Naive thymus-derived CD4-positive, alpha-beta T cell (primary cell): ENCODE measurements at regions of chr19 and their contacts with region 1.

Region 1: GRCh38 chr19:43438291-43439096 is 23.8 kb downstream of the TEX101 start:
- DNase-seq: peak in 2 of 9 donors; percentile 19 to 21
- ATAC-seq: peak; percentile 4
- H3K4me3 ChIP-seq: peak overlapping the region; percentile 33
- H3K4me3 Mint-ChIP-seq: peak overlapping the region; percentile 49 to 77 (median 64)
- H3K27ac ChIP-seq: peak overlapping the region; percentile 72
- H3K27ac Mint-ChIP-seq: peak overlapping the region; percentile 81 to 99 (median 93)
- H3K4me1 ChIP-seq: peaks cover 23 to 30% of the 10 kb centered on the region in 2 donors
- H3K4me1 Mint-ChIP-seq: peaks cover 29 to 75% (median 62%) of the 10 kb centered on the region in 7 donors
- H3K27me3 ChIP-seq: no peaks in the 10 kb centered on the region
- H3K27me3 Mint-ChIP-seq: peaks cover 0 to 2% (median 0%) of the 10 kb centered on the region in 5 donors

Region 2: DNA sequence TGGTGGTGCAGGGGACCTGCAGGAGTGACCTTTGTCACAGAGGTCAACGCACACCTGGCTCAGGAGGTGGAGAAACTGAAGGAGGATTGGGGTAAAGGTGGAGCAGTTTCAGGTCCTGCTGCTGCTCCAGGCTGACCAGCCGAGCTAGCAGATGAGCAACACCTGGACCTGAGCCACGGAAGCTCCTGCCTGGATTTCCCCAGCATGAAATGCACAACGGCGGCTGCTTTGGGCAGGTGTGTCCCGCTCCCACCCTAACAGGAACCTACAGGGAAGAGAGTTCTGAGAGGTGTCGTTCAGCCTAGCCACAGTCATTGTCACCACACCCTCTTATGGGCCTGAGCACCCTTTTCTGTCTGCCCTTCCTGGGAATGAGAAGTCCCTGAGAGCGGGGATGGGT is 100.8 kb before region 1 on chr19:
- CTCF ChIA-PET with region 1: no interaction called
- POLR2A ChIA-PET with region 1: no interaction called
- intact Hi-C with region 1: no loop called
- DNase-seq: no peak
- ATAC-seq: no peak
- H3K4me3 ChIP-seq: no peak overlapping the region
- H3K4me3 Mint-ChIP-seq: no peak overlapping the region
- H3K27ac ChIP-seq: no peak overlapping the region
- H3K27ac Mint-ChIP-seq: no peak overlapping the region
- H3K4me1 ChIP-seq: no peaks in the 10 kb centered on the region
- H3K4me1 Mint-ChIP-seq: peaks cover 0 to 6% (median 0%) of the 10 kb centered on the region in 7 donors
- H3K27me3 ChIP-seq: no peaks in the 10 kb centered on the region
- H3K27me3 Mint-ChIP-seq: peaks cover 0 to 32% (median 24%) of the 10 kb centered on the region in 5 donors

Region 3: DNA sequence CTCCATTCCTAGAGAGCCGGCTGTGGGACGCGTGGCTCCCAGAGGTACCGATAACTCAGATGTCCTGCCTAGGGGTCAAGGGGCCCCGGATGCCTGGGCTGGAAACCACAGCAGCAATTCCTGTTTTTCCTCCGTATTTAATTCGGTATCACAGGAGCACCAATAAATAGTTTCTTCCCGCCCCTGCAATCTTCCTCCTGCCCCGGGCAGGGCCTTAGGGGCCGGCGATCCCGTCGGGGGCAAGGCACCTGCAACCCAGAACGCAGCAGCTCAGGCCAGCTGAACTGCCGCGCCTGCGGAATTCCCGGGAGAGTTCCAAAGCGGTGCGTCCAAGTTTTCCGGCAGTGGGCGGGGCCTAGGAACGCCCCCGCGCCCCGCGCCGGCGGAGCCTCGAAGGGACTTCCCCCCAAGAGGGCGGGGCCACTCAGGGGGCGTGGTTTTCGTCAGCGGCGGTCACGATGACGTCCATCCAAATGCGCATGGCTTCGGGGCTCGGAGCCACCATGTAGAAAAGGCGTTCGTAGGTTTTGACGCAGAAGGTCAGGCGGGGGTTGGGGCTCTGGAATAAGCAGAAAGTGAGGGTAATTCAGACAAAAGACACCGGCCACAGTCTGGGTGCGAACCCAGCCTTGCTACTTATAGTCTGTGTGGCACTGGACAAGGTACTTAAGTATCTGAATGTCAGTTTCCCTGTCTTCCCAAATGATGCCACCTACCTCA is 36.7 kb after region 1 on chr19:
- CTCF ChIA-PET with region 1: interaction called, 5 read pairs
- POLR2A ChIA-PET with region 1: interaction called, 6 read pairs
- intact Hi-C with region 1: loop called in 1 of 2 experiments (anchors 1 kb)
- DNase-seq: peak; percentile 95 to 99 (median 98)
- ATAC-seq: peak; percentile 93
- H3K4me3 ChIP-seq: peak overlapping the region; percentile 77
- H3K4me3 Mint-ChIP-seq: peak overlapping the region; percentile 75 to 93 (median 86)
- H3K27ac ChIP-seq: peak overlapping the region; percentile 92
- H3K27ac Mint-ChIP-seq: peak overlapping the region; percentile 93 to 100 (median 98)
- H3K4me1 ChIP-seq: peaks cover 9 to 30% of the 10 kb centered on the region in 2 donors
- H3K4me1 Mint-ChIP-seq: peaks cover 13 to 55% (median 41%) of the 10 kb centered on the region in 7 donors
- H3K27me3 ChIP-seq: no peaks in the 10 kb centered on the region
- H3K27me3 Mint-ChIP-seq: no peaks in the 10 kb centered on the region

Region 4: GRCh38 chr19:43526884-43527859 is 88.7 kb after region 1 on chr19 and contains the start of gene ETHE1:
- CTCF ChIA-PET with region 1: interaction called, 250 read pairs
- POLR2A ChIA-PET with region 1: interaction called, 28 read pairs
- intact Hi-C with region 1: no loop called
- DNase-seq: peak; percentile 39 to 86 (median 50)
- ATAC-seq: peak; percentile 86
- H3K4me3 ChIP-seq: peak within 1 kb of the TSS; percentile 75
- H3K4me3 Mint-ChIP-seq: peak within 1 kb of the TSS; percentile 78 to 94 (median 84)
- H3K27ac ChIP-seq: peak within 1 kb of the TSS; percentile 81
- H3K27ac Mint-ChIP-seq: peak within 1 kb of the TSS; percentile 75 to 96 (median 86)
- H3K4me1 ChIP-seq: peaks cover 15 to 24% of the 10 kb centered on the region in 2 donors
- H3K4me1 Mint-ChIP-seq: peaks cover 18 to 38% (median 25%) of the 10 kb centered on the region in 7 donors
- H3K27me3 ChIP-seq: no peaks in the 10 kb centered on the region
- H3K27me3 Mint-ChIP-seq: no peaks in the 10 kb centered on the region
- total RNA-seq, gene ETHE1: 20.3 to 58.6 (median 23.9) TPM

Region 5: DNA sequence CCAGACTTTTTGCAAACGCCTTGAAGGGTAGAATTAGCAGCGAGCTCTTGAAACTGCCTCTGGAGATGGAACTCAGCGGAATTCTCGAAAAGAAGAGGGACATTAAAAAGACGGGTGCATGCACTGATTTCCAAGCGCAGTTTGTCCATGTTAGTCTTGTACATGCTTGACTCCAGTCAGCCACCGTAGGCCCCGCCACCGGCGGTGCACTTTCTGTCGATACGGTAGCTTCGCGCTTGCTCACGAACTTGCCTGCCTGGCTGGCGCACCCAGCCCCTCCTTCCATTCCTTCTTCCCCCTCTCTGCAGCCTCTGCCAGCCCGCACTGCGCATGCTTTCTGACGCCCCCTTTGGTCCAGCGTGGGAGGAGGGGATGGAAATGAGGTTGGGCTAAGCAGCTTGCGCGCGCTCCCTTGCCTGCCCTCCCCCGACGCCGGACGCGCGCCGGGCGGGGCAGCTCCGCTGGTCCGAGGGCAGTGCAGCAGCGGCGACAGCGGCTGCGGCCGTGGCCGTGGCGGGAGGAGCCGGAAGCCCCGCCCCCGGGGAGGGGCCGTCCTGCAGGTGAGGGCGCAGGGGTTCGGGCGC is 94.6 kb after region 1 on chr19 and contains the start of gene ZNF575:
- CTCF ChIA-PET with region 1: interaction called, 4 read pairs
- POLR2A ChIA-PET with region 1: interaction called, 28 read pairs
- intact Hi-C with region 1: no loop called
- DNase-seq: peak; percentile 61 to 91 (median 87)
- ATAC-seq: peak; percentile 64
- H3K4me3 ChIP-seq: peak within 1 kb of the TSS; percentile 98
- H3K4me3 Mint-ChIP-seq: peak within 1 kb of the TSS; percentile 88 to 98 (median 95)
- H3K27ac ChIP-seq: peak within 1 kb of the TSS; percentile 68
- H3K27ac Mint-ChIP-seq: peak within 1 kb of the TSS; percentile 90 to 98 (median 95)
- H3K4me1 ChIP-seq: peaks cover 12 to 14% of the 10 kb centered on the region in 2 donors
- H3K4me1 Mint-ChIP-seq: peaks cover 5 to 27% (median 18%) of the 10 kb centered on the region in 7 donors
- H3K27me3 ChIP-seq: no peaks in the 10 kb centered on the region
- H3K27me3 Mint-ChIP-seq: no peaks in the 10 kb centered on the region
- total RNA-seq, gene ZNF575: 4.5 to 10.7 (median 5.6) TPM